ENCODE measurements at regions of chrX and their contacts with region 1.

Region 1: DNA sequence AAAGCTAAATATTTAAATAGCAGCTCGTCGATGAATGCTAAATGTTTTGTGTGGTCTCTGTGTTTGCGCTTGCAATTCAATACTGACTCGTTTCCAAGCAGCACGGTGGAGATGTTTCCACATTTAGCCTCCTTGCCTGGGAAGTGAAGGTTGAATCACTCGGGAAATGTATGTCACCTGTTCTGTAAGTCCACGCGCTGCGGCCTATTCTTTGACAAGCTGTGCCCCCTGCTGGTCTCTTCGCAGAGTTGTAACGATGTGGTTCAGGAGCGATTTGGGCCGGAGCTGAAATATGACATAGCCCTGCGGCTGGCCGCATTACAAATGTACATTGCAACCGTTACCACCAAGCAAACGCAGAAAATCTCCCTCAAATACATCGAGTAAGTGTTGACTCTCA is 89.6 kb upstream of the PRPS2 start:
- DNase-seq: peak; percentile 47
- H3K4me3 Mint-ChIP-seq: no peak overlapping the region
- H3K27ac Mint-ChIP-seq: no peak overlapping the region
- H3K4me1 Mint-ChIP-seq: no peaks in the 10 kb centered on the region
- H3K27me3 Mint-ChIP-seq: peaks cover 6% of the 10 kb centered on the region

Region 2: GRCh38 chrX:12497832-12498591 is 203.6 kb before region 1 on chrX:
- CTCF ChIA-PET with region 1: interaction called, 4 read pairs
- POLR2A ChIA-PET with region 1: no interaction called
- intact Hi-C with region 1: loop called (anchors 10 kb)
- DNase-seq: no peak
- H3K4me3 Mint-ChIP-seq: no peak overlapping the region
- H3K27ac Mint-ChIP-seq: no peak overlapping the region
- H3K4me1 Mint-ChIP-seq: no peaks in the 10 kb centered on the region
- H3K27me3 Mint-ChIP-seq: no peaks in the 10 kb centered on the region

Measured in activated CD4-positive, alpha-beta memory T cell treated with anti-CD3 and anti-CD28 coated beads for 36 hours (primary cell).